K562 (cell line): ENCODE measurements at regions of chr16 and their contacts with region 1.

Region 1: GRCh38 chr16:13919683-13920509 is at the start of gene ERCC4:
- DNase-seq: peak; percentile 97 to 98 (median 98)
- ATAC-seq: peak; percentile 100
- H3K4me3 ChIP-seq: peak within 1 kb of the TSS; percentile 65
- H3K27ac ChIP-seq: peak within 1 kb of the TSS; percentile 38
- H3K4me1 ChIP-seq: peaks cover 0 to 8% of the 10 kb centered on the region in 2 experiments; a peak in 3 of 5 replicates
- H3K27me3 ChIP-seq: peaks cover 0 to 10% of the 10 kb centered on the region in 2 experiments; a peak in 1 of 5 replicates
- CTCF ChIP-seq: peak; percentile 91 to 98 (median 95)
- EP300 ChIP-seq: no peak
- POLR2A ChIP-seq: peak; percentile 91
- RAD21 ChIP-seq: peak in 1 of 2 experiments; percentile 44; a peak in 2 of 4 replicates
- polyA plus RNA-seq, gene ERCC4: 4.4 to 7.7 TPM

Region 2: GRCh38 chr16:12158428-12158827 is 1761.5 kb before region 1 on chr16:
- CTCF ChIA-PET with region 1: no interaction called
- POLR2A ChIA-PET with region 1: no interaction called
- in situ Hi-C with region 1: no loop called
- intact Hi-C with region 1: no loop called
- DNase-seq: no peak
- ATAC-seq: no peak
- H3K4me3 ChIP-seq: no peak overlapping the region
- H3K27ac ChIP-seq: no peak overlapping the region
- H3K4me1 ChIP-seq: no peaks in the 10 kb centered on the region
- H3K27me3 ChIP-seq: peaks cover 0 to 8% of the 10 kb centered on the region in 2 experiments; a peak in 3 of 5 replicates
- CTCF ChIP-seq: no peak
- EP300 ChIP-seq: no peak
- POLR2A ChIP-seq: no peak
- RAD21 ChIP-seq: no peak

Region 3: DNA sequence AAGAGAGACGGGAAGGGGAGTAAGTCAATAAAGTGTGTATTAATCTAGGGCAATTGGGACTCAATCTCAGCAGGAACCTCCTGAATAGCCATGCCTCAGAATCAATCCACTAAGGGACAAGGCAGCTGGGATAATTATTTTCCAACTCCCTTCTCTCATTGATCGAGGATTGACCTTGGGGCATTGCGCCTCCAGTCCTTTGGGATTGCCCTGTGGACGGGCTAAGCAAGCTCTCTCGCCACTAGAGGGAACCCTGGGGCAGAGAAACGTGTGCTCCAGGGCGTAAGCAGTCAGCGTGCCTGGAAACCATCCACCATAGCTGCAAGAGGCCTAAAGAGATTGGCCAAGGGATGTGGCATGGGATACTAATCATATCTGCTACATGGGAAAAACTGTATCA is 53.8 kb before region 1 on chr16:
- CTCF ChIA-PET with region 1: interaction called, 4 read pairs
- POLR2A ChIA-PET with region 1: no interaction called
- in situ Hi-C with region 1: no loop called
- intact Hi-C with region 1: loop called (anchors 5 kb)
- DNase-seq: peak; percentile 61 to 77 (median 67)
- ATAC-seq: peak; percentile 99
- H3K4me3 ChIP-seq: no peak overlapping the region
- H3K27ac ChIP-seq: no peak overlapping the region
- H3K4me1 ChIP-seq: no peaks in the 10 kb centered on the region
- H3K27me3 ChIP-seq: no peaks in the 10 kb centered on the region; a peak in 2 of 5 replicates
- CTCF ChIP-seq: peak; percentile 72 to 86 (median 80)
- EP300 ChIP-seq: no peak
- POLR2A ChIP-seq: no peak
- RAD21 ChIP-seq: peak; percentile 35 to 71

Region 4: DNA sequence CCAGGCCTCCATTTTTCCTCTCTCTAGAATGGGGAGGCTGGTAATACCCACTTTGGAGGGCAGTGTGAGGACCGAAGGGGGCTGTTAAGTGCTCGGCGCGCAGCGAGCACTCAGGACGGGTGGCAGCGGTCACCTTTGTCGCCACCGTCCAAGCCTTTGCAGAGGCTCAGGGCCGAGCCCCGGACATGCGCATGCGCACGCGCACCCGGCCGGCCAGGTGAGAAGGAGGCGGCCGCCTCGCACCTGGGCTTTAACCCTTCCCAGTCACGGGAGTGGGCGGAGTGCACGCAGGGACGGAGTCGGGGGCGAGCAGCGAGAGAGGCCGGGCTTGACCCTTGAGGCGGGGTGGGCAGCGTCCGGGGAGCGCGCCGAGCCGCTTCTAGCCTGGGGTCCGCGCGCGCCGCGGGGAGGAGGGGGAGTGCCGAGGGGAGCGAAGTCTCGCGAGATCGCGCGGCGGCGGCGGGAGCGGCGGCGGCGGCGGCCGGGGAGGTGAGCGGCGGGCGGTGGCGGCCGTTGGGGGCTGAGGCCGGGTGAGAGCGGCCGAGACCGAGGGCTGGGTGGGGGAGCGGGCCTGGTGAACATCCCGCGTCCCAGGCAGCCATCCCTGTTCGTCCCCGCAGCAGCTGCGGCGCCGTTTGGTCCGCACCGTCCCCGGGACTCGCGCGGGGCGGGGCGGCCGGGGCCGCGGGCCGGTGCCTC is 151.1 kb after region 1 on chr16 and contains the start of gene MRTFB:
- CTCF ChIA-PET with region 1: no interaction called
- POLR2A ChIA-PET with region 1: no interaction called
- in situ Hi-C with region 1: no loop called
- intact Hi-C with region 1: loop called (anchors 10 kb)
- DNase-seq: peak; percentile 86 to 94 (median 91)
- ATAC-seq: peak; percentile 93
- H3K4me3 ChIP-seq: peak within 1 kb of the TSS; percentile 85
- H3K27ac ChIP-seq: peak within 1 kb of the TSS; percentile 78
- H3K4me1 ChIP-seq: peaks cover 7 to 12% of the 10 kb centered on the region in 2 experiments; a peak in 4 of 5 replicates
- H3K27me3 ChIP-seq: no peaks in the 10 kb centered on the region
- CTCF ChIP-seq: no peak; a peak in 1 of 6 replicates
- EP300 ChIP-seq: no peak
- POLR2A ChIP-seq: peak; percentile 78
- RAD21 ChIP-seq: no peak
- polyA plus RNA-seq, gene MRTFB: 2.2 to 2.3 TPM

Region 5: DNA sequence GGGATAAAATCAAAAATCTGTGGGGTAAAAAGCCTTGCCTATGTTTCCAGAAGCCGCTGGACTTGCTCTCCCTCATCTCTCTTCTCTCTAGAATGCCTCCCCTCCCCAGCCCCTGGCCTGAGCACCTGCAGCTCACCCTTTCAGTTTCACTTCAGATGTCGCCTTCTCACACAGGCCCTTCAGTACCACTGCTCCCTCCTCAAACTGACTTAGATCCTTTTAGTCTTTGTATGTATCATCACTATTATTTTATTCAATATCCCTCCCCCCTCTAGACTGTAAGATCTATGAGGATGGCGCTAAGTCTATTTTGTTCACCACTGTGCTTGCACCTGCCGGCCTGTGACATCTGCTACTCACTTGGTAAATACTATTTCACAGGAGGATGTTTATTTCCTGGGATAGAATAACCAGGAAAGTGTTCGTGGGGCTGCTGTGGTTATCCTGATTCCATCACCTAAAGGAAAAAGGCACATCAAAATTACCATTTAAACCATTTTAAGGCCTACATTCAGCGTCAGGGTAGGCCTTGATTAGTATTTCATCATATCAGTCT is 273.5 kb after region 1 on chr16:
- CTCF ChIA-PET with region 1: interaction called, 7 read pairs
- POLR2A ChIA-PET with region 1: no interaction called
- in situ Hi-C with region 1: no loop called
- intact Hi-C with region 1: loop called (anchors 5 kb)
- DNase-seq: no peak
- ATAC-seq: no peak
- H3K4me3 ChIP-seq: no peak overlapping the region
- H3K27ac ChIP-seq: no peak overlapping the region
- H3K4me1 ChIP-seq: peaks cover 0 to 7% of the 10 kb centered on the region in 2 experiments; a peak in 1 of 5 replicates
- H3K27me3 ChIP-seq: no peaks in the 10 kb centered on the region
- CTCF ChIP-seq: no peak
- EP300 ChIP-seq: no peak
- POLR2A ChIP-seq: no peak
- RAD21 ChIP-seq: no peak

Region 6: DNA sequence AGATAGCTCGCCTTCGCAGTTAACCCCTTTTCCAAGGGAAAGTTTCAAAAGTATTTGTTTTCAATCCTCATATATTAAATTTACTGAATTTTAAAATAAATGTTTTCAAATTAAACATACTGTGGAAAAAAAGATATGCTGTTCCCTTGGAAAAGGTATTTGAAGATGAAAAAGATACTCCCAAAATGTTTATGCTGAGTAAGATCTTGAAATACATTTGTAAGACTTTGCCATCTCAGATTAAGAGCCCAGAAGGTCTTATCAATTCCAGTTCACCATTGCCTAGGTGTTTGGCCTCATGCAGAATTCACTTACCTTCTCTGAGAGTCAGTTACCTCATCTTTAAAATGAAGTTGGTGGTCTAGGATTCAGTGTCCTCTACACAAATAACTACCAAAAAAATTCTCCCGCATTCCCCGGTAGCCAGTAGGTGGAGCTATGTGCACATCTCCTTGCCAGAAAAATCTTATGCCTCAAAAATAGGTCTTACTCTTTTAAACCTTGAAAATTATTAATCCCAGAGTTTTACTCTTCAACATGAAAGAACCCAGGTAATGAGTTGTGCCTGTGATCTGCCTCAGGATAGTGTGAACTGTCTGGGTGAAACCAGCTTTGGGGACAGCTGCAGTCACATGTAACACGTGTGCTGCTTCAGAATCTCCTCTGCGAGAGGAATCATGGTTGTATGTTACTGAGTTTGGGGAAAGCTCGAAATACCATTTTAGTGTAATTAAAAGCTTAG is 329.6 kb after region 1 on chr16:
- CTCF ChIA-PET with region 1: no interaction called
- POLR2A ChIA-PET with region 1: no interaction called
- in situ Hi-C with region 1: no loop called
- intact Hi-C with region 1: loop called (anchors 2 kb)
- DNase-seq: peak; percentile 34 to 58 (median 40)
- ATAC-seq: no peak
- H3K4me3 ChIP-seq: no peak overlapping the region
- H3K27ac ChIP-seq: no peak overlapping the region
- H3K4me1 ChIP-seq: no peaks in the 10 kb centered on the region
- H3K27me3 ChIP-seq: no peaks in the 10 kb centered on the region
- CTCF ChIP-seq: peak; percentile 64 to 85 (median 83)
- EP300 ChIP-seq: no peak
- POLR2A ChIP-seq: no peak
- RAD21 ChIP-seq: peak; percentile 61 to 72

Region 7: DNA sequence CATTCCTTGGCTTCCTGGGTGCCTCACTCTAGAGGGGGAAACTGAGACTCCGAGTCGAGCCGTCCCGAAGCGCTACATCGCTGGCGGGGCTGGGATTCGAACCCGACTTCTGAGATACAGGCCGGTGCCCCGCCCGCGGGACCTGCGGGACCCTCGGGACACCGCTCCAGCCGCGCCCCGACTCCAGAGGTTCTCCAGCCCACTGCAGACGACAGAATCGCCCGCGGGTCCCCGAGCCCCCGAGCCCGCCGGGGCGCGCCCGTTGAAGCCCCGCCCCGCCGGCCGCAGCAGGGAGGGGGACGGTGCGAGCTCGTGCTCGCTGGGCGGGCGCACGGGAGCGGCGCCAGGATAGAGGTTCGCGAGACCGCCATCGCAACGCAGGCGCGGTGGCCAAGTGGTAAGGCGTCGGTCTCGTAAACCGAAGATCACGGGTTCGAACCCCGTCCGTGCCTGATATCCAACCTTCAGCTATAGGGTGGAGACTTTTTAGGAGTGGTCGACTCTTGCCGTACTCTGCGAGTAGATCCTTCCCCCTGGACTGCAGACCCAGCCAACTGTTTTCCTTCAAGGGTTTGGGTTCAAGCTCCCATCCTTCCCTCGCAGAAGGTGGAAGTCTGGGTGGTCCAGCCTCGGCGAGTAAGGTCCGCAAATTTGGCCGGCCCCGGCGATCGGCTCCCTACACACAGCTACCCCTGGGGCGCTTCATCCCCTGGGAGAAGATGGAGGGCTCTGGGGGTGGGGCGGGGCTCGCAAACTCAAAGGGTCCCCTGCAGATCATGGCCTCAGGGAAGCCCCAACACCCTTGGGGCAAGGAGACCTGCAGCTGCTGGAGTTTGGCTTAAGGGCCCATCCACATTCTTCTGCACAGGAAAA is 365.9 kb after region 1 on chr16:
- CTCF ChIA-PET with region 1: interaction called, 5 read pairs
- POLR2A ChIA-PET with region 1: interaction called, 9 read pairs
- in situ Hi-C with region 1: loop called (anchors 5 kb)
- intact Hi-C with region 1: loop called (anchors 2 kb)
- DNase-seq: peak; percentile 90 to 97 (median 92)
- ATAC-seq: peak; percentile 92
- H3K4me3 ChIP-seq: peak overlapping the region; percentile 98
- H3K27ac ChIP-seq: peak overlapping the region; percentile 72
- H3K4me1 ChIP-seq: peaks cover 3 to 15% of the 10 kb centered on the region in 2 experiments; a peak in 4 of 5 replicates
- H3K27me3 ChIP-seq: no peaks in the 10 kb centered on the region
- CTCF ChIP-seq: no peak
- EP300 ChIP-seq: peak; percentile 59; the same call in 1 of the 2 replicates
- POLR2A ChIP-seq: no peak
- RAD21 ChIP-seq: 0 out of 4 replicates have a peak, but pooled peaks of 1 of the 2 experiments have one; percentile 10

Region 8: DNA sequence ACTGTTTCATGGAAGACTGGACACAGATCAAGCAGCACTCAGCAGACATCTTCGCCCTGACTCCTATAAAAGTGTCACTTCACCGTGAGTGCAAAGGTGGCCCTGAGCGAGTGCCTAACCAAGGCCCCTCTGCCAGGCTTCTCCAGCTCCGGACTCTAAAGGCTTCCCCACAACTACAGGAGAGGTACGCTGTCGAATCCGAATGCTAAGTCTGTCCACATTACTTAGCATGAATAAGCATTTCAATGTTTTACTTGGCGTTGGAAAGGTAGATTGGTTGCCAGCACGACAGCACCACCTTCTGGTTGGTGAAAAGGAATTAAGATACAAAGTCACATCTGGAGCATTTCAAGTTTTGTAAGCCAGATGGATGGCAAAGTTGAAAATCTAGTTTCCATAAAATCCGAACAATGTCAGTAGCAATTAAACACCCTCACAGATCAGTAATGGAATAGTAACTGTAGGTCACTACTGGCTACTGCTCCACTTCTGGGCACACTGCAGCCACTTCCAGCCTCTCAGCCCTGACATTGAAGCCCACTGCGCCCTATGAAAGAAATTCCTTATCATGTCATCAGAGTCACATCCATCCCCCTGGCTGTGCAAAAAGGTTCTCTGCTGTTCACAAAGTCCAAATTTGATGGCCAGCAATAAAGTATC is 609.2 kb after region 1 on chr16:
- CTCF ChIA-PET with region 1: interaction called, 4 read pairs
- POLR2A ChIA-PET with region 1: no interaction called
- in situ Hi-C with region 1: loop called (anchors 10 kb)
- intact Hi-C with region 1: loop called (anchors 5 kb)
- DNase-seq: peak; percentile 64 to 93 (median 68)
- ATAC-seq: peak; percentile 94
- H3K4me3 ChIP-seq: no peak overlapping the region
- H3K27ac ChIP-seq: peak overlapping the region; percentile 75
- H3K4me1 ChIP-seq: peaks cover 0 to 22% of the 10 kb centered on the region in 2 experiments; a peak in 4 of 5 replicates
- H3K27me3 ChIP-seq: no peaks in the 10 kb centered on the region
- CTCF ChIP-seq: peak; percentile 73 to 90 (median 81)
- EP300 ChIP-seq: no peak
- POLR2A ChIP-seq: no peak
- RAD21 ChIP-seq: peak; percentile 92 to 96